Activated CD4-positive, alpha-beta T cell treated with anti-CD3 and anti-CD28 coated beads for 36 hours (primary cell): ENCODE measurements at regions of chr4 and their contacts with region 1.

Region 1: DNA sequence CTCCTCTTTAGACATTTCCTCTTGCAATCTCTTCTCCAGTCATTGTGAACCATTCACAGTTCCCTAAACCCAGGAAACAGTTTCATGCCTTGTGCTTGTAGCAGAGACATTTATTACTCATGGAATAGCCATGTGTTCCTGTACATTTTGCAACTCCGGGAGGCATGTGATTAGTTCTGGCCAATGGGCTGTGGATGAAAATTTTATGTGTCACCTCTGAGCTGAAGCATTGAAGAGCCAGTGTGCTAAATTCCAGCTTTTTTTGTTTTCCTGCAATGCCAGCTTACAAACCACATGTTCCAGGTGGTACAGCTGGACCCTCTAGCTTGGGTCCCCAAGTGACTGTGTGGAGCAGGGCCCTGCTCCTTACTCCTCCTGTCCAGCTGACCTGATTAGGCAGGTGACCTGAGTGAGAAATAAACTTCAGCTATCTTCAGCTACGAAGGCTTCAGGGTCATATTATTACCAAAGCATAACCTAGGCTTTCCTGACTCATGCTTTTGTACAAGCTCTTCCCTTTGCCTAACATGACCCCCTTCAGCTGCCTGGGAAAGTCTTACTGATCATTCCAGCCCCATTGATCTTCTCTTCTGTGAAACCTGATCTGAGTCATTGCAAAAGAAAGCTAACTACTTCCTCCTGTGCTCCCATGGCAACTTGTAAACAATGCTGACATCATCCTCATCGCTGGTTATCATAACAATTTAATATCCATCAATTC is 200.4 kb downstream of the PTTG2 start:
- DNase-seq: peak; percentile 69
- ATAC-seq: peak; percentile 79
- H3K4me3 Mint-ChIP-seq: no peak overlapping the region
- H3K27ac Mint-ChIP-seq: peak overlapping the region; percentile 73
- H3K4me1 Mint-ChIP-seq: peaks cover 70% of the 10 kb centered on the region
- H3K27me3 Mint-ChIP-seq: no peaks in the 10 kb centered on the region

Region 2: DNA sequence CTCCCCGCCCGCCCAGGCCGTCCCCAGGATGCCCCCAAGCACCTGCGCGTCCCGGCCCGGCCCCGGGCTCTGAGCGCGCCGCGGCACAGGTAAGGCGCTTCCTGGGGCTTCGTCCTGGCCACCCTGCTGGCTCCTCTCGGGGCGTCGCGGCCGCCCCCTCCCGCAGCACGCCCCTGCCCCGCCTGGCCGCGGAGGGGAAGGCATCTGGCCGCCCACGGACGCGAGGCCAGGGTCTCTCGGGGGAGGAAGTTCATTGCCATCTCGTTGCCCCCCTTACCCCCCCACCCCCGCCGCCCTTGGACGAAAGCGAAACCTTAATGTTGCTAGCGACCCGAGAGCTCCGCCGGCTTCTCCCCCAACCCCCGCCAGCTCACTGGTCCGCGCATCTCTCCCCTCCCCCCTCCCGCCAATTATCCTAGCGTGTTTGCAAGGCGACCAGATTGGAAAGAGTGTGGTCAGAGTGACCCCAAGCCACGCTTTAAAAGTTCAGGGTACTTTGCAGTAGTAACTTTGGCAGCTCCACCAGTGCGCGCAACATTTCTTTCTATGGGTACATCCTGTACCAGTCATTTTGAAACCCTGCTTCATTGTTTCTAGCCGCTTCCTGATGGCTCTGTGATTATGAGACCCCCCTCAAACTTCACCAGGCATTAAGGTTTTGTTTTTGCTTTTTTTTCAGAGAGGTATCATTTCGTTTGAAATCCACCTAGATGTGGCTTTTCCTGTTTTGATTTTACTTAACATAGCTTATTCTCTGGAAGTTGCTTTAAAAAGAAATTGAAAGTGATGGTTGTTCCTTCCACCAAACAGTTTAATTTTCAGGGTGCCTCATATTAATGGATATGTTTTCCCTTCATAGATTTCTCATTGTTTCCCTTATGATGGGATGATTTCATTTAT is 269.1 kb before region 1 on chr4:
- CTCF ChIA-PET with region 1: no interaction called
- POLR2A ChIA-PET with region 1: no interaction called
- intact Hi-C with region 1: loop called in 1 of 2 experiments (anchors 1 kb)
- DNase-seq: peak; percentile 73
- ATAC-seq: peak; percentile 78
- H3K4me3 Mint-ChIP-seq: peak overlapping the region; percentile 78
- H3K27ac Mint-ChIP-seq: peak overlapping the region; percentile 93
- H3K4me1 Mint-ChIP-seq: peaks cover 35% of the 10 kb centered on the region
- H3K27me3 Mint-ChIP-seq: peaks cover 3% of the 10 kb centered on the region

Region 3: GRCh38 chr4:38062088-38062893 is 98.4 kb before region 1 on chr4:
- CTCF ChIA-PET with region 1: interaction called, 3 read pairs
- POLR2A ChIA-PET with region 1: no interaction called
- intact Hi-C with region 1: loop called in 1 of 2 experiments (anchors 5 kb)
- DNase-seq: peak; percentile 82
- ATAC-seq: peak; percentile 79
- H3K4me3 Mint-ChIP-seq: peak overlapping the region; percentile 75
- H3K27ac Mint-ChIP-seq: peak overlapping the region; percentile 87
- H3K4me1 Mint-ChIP-seq: peaks cover 14% of the 10 kb centered on the region
- H3K27me3 Mint-ChIP-seq: no peaks in the 10 kb centered on the region

Region 4: GRCh38 chr4:38091636-38092035 is 69.0 kb before region 1 on chr4:
- CTCF ChIA-PET with region 1: interaction called, 5 read pairs
- POLR2A ChIA-PET with region 1: interaction called, 6 read pairs
- intact Hi-C with region 1: loop called (anchors 1 kb)
- DNase-seq: no peak
- ATAC-seq: no peak
- H3K4me3 Mint-ChIP-seq: no peak overlapping the region
- H3K27ac Mint-ChIP-seq: peak overlapping the region; percentile 89
- H3K4me1 Mint-ChIP-seq: peaks cover 34% of the 10 kb centered on the region
- H3K27me3 Mint-ChIP-seq: no peaks in the 10 kb centered on the region

Region 5: DNA sequence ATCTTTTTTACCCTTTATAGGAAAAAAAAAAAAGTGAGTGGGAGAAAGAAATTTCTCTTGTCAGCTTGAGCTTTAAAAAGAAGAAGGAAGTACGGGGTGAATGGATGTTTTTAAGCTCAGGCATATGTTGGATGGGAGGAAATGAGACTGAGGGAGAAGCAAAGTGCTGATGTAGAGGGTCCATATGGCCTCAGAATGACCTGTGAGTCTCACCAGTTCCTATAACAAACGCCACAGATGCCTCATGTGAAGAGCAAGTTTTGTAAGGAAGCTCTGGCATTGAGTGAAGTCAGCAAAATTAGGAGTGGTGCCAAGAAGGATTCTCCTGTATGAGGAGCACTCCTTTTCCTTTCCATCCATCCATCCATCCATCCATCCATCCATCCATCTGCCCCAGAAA is 14.2 kb after region 1 on chr4:
- CTCF ChIA-PET with region 1: interaction called, 10 read pairs
- POLR2A ChIA-PET with region 1: no interaction called
- intact Hi-C with region 1: no loop called
- DNase-seq: no peak
- ATAC-seq: no peak
- H3K4me3 Mint-ChIP-seq: no peak overlapping the region
- H3K27ac Mint-ChIP-seq: no peak overlapping the region
- H3K4me1 Mint-ChIP-seq: peaks cover 50% of the 10 kb centered on the region
- H3K27me3 Mint-ChIP-seq: peaks cover 2% of the 10 kb centered on the region

Region 6: DNA sequence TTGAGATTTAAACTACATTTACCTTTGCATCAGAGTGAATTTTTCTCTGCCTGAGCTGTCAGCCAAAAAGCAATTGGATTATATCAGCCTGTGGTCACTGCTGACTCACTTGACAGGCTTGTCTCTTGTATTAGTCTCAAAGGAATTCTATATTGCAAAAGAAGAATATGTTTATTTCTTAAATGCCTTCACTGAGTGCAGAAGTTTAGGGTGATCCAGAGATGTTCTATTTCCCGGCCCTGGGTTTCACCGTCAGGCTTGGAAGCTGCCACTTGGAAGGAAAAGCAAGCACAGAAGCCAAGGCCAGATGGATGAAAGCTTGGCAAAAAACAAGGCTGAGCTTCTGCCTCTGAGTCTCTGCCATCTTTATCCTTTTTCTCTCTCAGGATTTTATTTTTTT is 787.9 kb after region 1 on chr4:
- CTCF ChIA-PET with region 1: no interaction called
- POLR2A ChIA-PET with region 1: no interaction called
- intact Hi-C with region 1: loop called in 1 of 2 experiments (anchors 10 kb)
- DNase-seq: no peak
- ATAC-seq: no peak
- H3K4me3 Mint-ChIP-seq: no peak overlapping the region
- H3K27ac Mint-ChIP-seq: peak overlapping the region; percentile 81
- H3K4me1 Mint-ChIP-seq: peaks cover 31% of the 10 kb centered on the region
- H3K27me3 Mint-ChIP-seq: no peaks in the 10 kb centered on the region